AG04449 (cell line): ENCODE measurements at regions of chr16 and their contacts with region 1.

Region 1: GRCh38 chr16:89167425-89167941 is 4.1 kb upstream of the CDH15 start:
- DNase-seq: no peak
- H3K4me3 ChIP-seq: peak overlapping the region; percentile 18
- CTCF ChIP-seq: peak; percentile 90

Region 2: GRCh38 chr16:88856828-88857733 is 310.4 kb before region 1 on chr16 and contains the starts of genes GALNS and TRAPPC2L:
- CTCF ChIA-PET with region 1: interaction called, 16 read pairs
- POLR2A ChIA-PET with region 1: no interaction called
- DNase-seq: peak; percentile 29
- H3K4me3 ChIP-seq: peak within 1 kb of the TSS; percentile 99
- CTCF ChIP-seq: no peak

Region 3: GRCh38 chr16:88941913-88942909 is 225.3 kb before region 1 on chr16:
- CTCF ChIA-PET with region 1: interaction called, 13 read pairs
- POLR2A ChIA-PET with region 1: no interaction called
- DNase-seq: no peak
- H3K4me3 ChIP-seq: no peak overlapping the region
- CTCF ChIP-seq: peak; percentile 65

Region 4: DNA sequence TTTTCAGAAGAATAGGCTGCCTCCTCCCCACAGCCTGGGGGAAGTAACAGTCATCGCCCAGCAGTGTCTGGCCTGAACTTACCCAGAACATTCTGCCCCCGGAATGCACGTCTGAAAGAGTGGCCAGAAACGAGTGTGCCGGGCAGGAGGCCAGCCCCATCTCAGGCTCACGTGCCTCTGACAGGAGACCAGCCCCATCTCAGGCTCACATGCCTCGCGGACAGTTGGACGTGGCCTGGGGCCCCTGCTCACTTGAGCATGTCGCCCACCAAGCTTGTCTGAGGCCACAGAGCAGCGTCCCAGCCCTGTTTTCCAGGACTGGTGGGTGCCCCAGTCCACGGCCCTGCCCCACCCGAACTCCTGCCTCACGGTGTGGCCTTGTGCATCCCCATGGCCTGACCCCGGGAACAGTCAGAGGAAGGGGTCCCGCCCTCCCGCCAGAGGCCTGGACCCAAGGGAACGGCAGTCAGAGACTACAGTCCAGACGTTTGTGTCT is 12.3 kb before region 1 on chr16:
- CTCF ChIA-PET with region 1: interaction called, 16 read pairs
- POLR2A ChIA-PET with region 1: interaction called, 3 read pairs
- DNase-seq: no peak
- H3K4me3 ChIP-seq: no peak overlapping the region
- CTCF ChIP-seq: no peak

Region 5: DNA sequence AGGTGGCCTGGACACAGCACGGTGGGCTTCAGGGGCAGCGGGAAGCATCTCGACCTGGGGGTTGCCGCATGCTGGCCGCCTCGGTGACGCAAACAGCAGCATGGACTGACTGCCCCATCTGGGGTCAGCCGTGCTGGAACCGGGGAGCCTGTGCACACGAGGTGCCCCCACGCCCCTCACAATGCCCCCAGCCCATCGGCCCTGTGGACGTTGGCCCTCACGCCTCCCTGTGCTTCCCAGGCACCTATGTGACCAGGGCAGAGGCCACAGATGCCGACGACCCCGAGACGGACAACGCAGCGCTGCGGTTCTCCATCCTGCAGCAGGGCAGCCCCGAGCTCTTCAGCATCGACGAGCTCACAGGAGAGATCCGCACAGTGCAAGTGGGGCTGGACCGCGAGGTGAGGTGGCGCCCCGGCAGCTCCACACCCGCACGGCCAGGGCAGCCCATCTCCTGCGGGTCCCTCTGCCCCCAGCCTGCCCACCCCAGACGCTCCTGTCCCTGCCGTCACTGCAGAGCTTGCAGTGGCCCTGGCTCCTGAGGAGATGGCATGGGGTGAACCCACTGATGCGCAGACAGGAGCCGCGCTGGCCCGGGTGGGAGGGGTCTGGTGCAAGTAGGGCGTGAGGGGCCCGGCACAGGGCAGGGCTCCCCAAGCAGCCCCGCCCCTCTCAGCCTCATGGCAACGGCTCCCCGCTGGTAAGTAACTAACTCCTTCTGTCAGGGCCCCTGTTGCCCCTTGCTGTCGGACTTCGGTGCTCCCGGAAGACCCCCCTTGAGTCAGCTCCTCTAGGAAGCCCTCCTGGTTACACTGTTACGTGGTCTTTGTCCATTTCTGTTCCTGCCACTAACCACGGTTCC is 17.7 kb after region 1 on chr16:
- CTCF ChIA-PET with region 1: interaction called, 17 read pairs
- POLR2A ChIA-PET with region 1: no interaction called
- DNase-seq: no peak
- H3K4me3 ChIP-seq: no peak overlapping the region
- CTCF ChIP-seq: no peak

Region 6: GRCh38 chr16:89210904-89211515 is 43.5 kb after region 1 on chr16:
- CTCF ChIA-PET with region 1: interaction called, 11 read pairs
- POLR2A ChIA-PET with region 1: no interaction called
- DNase-seq: no peak
- H3K4me3 ChIP-seq: no peak overlapping the region
- CTCF ChIP-seq: no peak

Region 7: DNA sequence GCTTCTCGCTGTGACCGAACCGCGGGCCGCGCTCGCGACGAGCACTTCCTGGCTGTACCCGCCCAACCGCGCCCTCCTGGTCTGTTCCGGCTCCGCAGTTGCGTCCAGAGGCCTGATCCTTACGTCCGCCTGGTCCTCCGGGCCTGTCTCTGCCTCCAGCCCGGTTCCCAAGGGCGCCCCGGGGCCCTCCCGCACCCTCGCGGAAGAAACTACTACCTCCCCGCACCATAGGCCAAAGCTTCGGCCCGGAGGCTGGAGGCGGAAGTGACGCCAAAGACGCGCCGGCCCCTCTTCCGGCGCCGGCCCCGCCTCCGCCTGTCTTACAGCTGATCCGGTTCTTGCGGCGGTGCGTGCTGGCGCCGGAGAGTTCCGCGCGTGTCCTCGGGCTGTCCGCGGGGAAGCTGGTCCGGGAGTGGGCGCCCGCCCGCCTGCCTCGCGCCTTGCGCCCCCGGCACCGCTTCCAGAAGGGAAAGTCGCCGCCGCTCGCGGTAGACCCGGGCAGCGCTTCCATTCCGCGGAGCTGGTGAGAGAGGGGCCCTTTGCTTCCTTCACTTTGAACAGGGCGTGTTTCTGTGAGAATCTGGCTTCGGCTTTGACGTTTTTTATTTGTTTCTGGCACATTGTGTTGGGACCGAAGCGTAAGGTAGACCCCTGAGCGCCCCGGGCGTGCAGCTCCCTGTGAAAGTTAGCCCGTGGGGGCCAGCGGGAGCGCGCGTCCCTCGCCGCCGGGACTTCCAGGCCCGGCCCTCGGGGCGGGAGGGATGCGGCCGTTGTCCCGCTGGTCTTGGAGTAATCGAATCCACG is 50.1 kb after region 1 on chr16 and contains the start of gene ZNF778:
- CTCF ChIA-PET with region 1: interaction called, 11 read pairs
- POLR2A ChIA-PET with region 1: no interaction called
- DNase-seq: peak; percentile 16
- H3K4me3 ChIP-seq: peak within 1 kb of the TSS; percentile 96
- CTCF ChIP-seq: no peak